Spleen (tissue), 13 donors: ENCODE measurements at regions of chr2 and their contacts with region 1.

Region 1: GRCh38 chr2:171160119-171160955 is at the start of gene TLK1:
- DNase-seq: peak; percentile 96
- H3K4me3 ChIP-seq: peak within 1 kb of the TSS; percentile 52 to 95 (median 80)
- H3K27ac ChIP-seq: peak within 1 kb of the TSS; percentile 93 to 98 (median 96)
- H3K4me1 ChIP-seq: peaks cover 26 to 77% (median 68%) of the 10 kb centered on the region in 6 donors
- H3K27me3 ChIP-seq: no peaks in the 10 kb centered on the region
- CTCF ChIP-seq: peak in 3 of 11 experiments; percentile 22 to 45 (median 28)
- POLR2A ChIP-seq: peak in 1 of 3 donors; percentile 32
- total RNA-seq, gene TLK1: 49.7 to 100.0 (median 87.5) TPM

Region 2: GRCh38 chr2:170950221-170950761 is 210.0 kb before region 1 on chr2:
- intact Hi-C with region 1: no loop called
- DNase-seq: no peak
- H3K4me3 ChIP-seq: no peak overlapping the region
- H3K27ac ChIP-seq: peak overlapping the region in 6 of 8 donors; percentile 3 to 77 (median 64)
- H3K4me1 ChIP-seq: peaks cover 0 to 37% (median 14%) of the 10 kb centered on the region in 6 donors
- H3K27me3 ChIP-seq: no peaks in the 10 kb centered on the region
- CTCF ChIP-seq: no peak
- POLR2A ChIP-seq: no peak

Region 3: DNA sequence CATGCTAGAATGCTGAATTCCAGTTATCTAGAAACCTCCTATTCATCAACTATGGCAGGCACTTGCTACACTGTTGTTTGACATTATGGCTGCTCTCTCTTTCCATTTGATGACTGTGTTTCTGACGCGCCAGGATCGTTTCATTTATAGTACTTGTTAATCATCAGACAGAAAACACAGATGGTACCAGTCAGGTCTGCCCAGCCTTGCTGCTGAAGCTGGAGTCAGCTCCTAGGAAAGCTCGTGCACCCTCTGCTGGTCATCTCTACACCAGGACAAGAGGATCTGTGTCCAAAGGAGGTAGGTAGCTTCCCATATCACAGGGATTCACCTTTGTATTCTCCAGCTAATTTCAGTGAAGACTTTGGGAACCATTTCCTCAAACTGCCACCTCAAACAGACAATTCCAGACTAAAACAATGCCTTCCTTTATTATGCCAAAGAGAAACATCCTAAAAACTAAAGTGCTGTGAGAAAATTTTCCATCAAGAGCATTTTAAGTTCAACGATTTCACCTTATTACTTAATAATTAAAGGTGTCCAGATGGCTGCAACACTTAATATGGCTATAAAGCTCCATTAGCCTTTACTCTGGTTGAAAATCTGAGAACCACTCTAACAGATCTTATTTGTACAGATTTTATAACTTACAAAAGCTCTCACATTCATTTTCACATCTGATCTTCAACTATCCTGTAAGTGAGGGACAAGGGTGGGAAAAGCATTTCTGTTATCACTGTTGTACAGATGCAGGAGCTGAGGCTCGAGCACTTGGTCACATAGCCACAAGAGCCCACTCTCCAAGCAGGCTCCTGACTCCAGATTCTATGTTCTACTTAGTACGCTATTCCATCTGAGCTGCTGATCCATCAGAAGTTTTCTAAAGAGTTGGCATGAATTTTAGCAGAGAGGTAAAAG is 255.9 kb after region 1 on chr2:
- intact Hi-C with region 1: loop called (anchors 5 kb)
- DNase-seq: peak; percentile 92
- H3K4me3 ChIP-seq: no peak overlapping the region
- H3K27ac ChIP-seq: peak overlapping the region in 6 of 8 donors; percentile 23 to 61 (median 44)
- H3K4me1 ChIP-seq: peaks cover 0 to 20% (median 10%) of the 10 kb centered on the region in 6 donors
- H3K27me3 ChIP-seq: no peaks in the 10 kb centered on the region
- CTCF ChIP-seq: peak; percentile 62 to 86 (median 80)
- POLR2A ChIP-seq: no peak

Region 4: GRCh38 chr2:171433763-171434670 is 273.7 kb after region 1 on chr2 and contains the starts of genes DCAF17 and METTL8:
- intact Hi-C with region 1: loop called (anchors 5 kb)
- DNase-seq: peak; percentile 100
- H3K4me3 ChIP-seq: peak within 1 kb of the TSS; percentile 51 to 92 (median 82)
- H3K27ac ChIP-seq: peak within 1 kb of the TSS; percentile 93 to 99 (median 98)
- H3K4me1 ChIP-seq: peaks cover 5 to 38% (median 21%) of the 10 kb centered on the region in 6 donors
- H3K27me3 ChIP-seq: no peaks in the 10 kb centered on the region
- CTCF ChIP-seq: peak in 10 of 11 experiments; percentile 29 to 72 (median 63)
- POLR2A ChIP-seq: peak in 2 of 3 donors; percentile 50 to 56
- total RNA-seq, gene DCAF17: 15.5 to 36.5 (median 20.9) TPM
- total RNA-seq, gene METTL8: 15.4 to 37.0 (median 23.2) TPM